ENCODE measurements at regions of chr18 and their contacts with region 1.

Region 1: GRCh38 chr18:36451454-36452251 is 154.1 kb downstream of the FHOD3 start:
- DNase-seq: no peak
- ATAC-seq: peak; percentile 5; the same call in 2 of the 3 replicates
- H3K4me3 ChIP-seq: no peak overlapping the region
- H3K27ac ChIP-seq: no peak overlapping the region
- H3K4me1 ChIP-seq: no peaks in the 10 kb centered on the region; the same call in 1 of the 2 replicates
- H3K27me3 ChIP-seq: no peaks in the 10 kb centered on the region
- CTCF ChIP-seq: no peak
- EP300 ChIP-seq: no peak
- POLR2A ChIP-seq: no peak
- RAD21 ChIP-seq: no peak

Region 2: GRCh38 chr18:36392164-36392978 is 59.3 kb before region 1 on chr18:
- CTCF ChIA-PET with region 1: no interaction called
- POLR2A ChIA-PET with region 1: no interaction called
- RAD21 ChIA-PET with region 1: no interaction called
- SMC1A ChIA-PET with region 1: no interaction called
- in situ Hi-C with region 1: no loop called
- intact Hi-C with region 1: loop called (anchors 10 kb)
- DNase-seq: no peak
- ATAC-seq: peak; percentile 10; the same call in 1 of the 3 replicates
- H3K4me3 ChIP-seq: no peak overlapping the region
- H3K27ac ChIP-seq: no peak overlapping the region
- H3K4me1 ChIP-seq: no peaks in the 10 kb centered on the region
- H3K27me3 ChIP-seq: no peaks in the 10 kb centered on the region
- CTCF ChIP-seq: no peak
- EP300 ChIP-seq: no peak
- POLR2A ChIP-seq: no peak
- RAD21 ChIP-seq: no peak

Region 3: GRCh38 chr18:36441426-36442240 is 10.0 kb before region 1 on chr18:
- CTCF ChIA-PET with region 1: interaction called, 12 read pairs
- POLR2A ChIA-PET with region 1: interaction called, 30 read pairs
- RAD21 ChIA-PET with region 1: interaction called, 29 read pairs
- SMC1A ChIA-PET with region 1: interaction called, 136 read pairs
- in situ Hi-C with region 1: no loop called
- intact Hi-C with region 1: no loop called
- DNase-seq: no peak
- ATAC-seq: peak; percentile 10; the same call in 2 of the 3 replicates
- H3K4me3 ChIP-seq: no peak overlapping the region
- H3K27ac ChIP-seq: no peak overlapping the region
- H3K4me1 ChIP-seq: no peaks in the 10 kb centered on the region
- H3K27me3 ChIP-seq: no peaks in the 10 kb centered on the region
- CTCF ChIP-seq: no peak
- EP300 ChIP-seq: peak in 1 of 2 experiments; percentile 16; a peak in 1 of 4 replicates
- POLR2A ChIP-seq: no peak
- RAD21 ChIP-seq: no peak

Region 4: GRCh38 chr18:36468161-36468560 is 16.5 kb after region 1 on chr18:
- CTCF ChIA-PET with region 1: interaction called, 11 read pairs
- POLR2A ChIA-PET with region 1: no interaction called
- RAD21 ChIA-PET with region 1: no interaction called
- SMC1A ChIA-PET with region 1: interaction called, 16 read pairs
- in situ Hi-C with region 1: no loop called
- intact Hi-C with region 1: no loop called
- DNase-seq: no peak
- ATAC-seq: no peak
- H3K4me3 ChIP-seq: no peak overlapping the region
- H3K27ac ChIP-seq: no peak overlapping the region
- H3K4me1 ChIP-seq: peaks cover 3% of the 10 kb centered on the region; the same call in 1 of the 2 replicates
- H3K27me3 ChIP-seq: no peaks in the 10 kb centered on the region
- CTCF ChIP-seq: no peak
- EP300 ChIP-seq: no peak
- POLR2A ChIP-seq: no peak
- RAD21 ChIP-seq: no peak

Measured in GM12878 (cell line).